Head of caudate nucleus (tissue), 42 donors: ENCODE measurements at regions of chr7 and their contacts with region 1.

Region 1: GRCh38 chr7:151368136-151368571 is 26.5 kb downstream of the NUB1 start:
- DNase-seq: peak in 41 of 42 donors; percentile 56 to 90 (median 77)

Region 2: DNA sequence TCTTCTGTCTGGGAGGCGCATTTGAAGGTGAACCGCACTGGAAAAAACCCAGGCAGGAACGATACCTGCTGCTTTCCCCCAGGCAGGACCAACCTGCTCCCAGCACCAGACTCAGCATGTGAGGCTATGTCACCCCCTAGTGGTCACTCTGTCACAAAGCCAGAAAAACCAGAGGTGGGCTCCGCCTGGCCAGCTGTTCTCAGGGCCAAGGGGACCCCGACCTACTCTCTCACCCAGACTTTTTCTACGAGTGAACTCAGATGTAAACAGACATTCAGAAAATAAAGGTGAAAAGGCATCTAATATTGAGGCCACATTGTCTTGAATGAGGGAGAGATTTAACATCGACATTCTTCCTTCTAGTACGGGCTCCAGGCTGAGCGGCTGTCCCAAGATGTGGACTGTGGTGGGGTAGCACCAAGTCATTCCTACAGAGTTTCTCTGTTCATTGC is 391.5 kb after region 1 on chr7:
- intact Hi-C with region 1: loop called (anchors 10 kb)
- DNase-seq: peak; percentile 28 to 84 (median 66)